Aorta (tissue), 5 donors: ENCODE measurements at regions of chr7 and their contacts with region 1.

Region 1: GRCh38 chr7:47581806-47582763 is at the start of gene TNS3:
- DNase-seq: peak; percentile 62 to 84
- ATAC-seq: peak; percentile 45
- H3K4me3 ChIP-seq: peak within 1 kb of the TSS; percentile 75 to 80
- H3K27ac ChIP-seq: peak within 1 kb of the TSS; percentile 8 to 90
- H3K4me1 ChIP-seq: peaks cover 4 to 10% of the 10 kb centered on the region in 2 donors
- H3K27me3 ChIP-seq: no peaks in the 10 kb centered on the region
- total RNA-seq, gene TNS3: 117 to 140 TPM

Region 2: GRCh38 chr7:47119261-47119865 is 462.7 kb before region 1 on chr7:
- intact Hi-C with region 1: no loop called
- DNase-seq: no peak
- ATAC-seq: peak; percentile 9
- H3K4me3 ChIP-seq: no peak overlapping the region
- H3K27ac ChIP-seq: peak overlapping the region in 1 of 2 donors; percentile 21
- H3K4me1 ChIP-seq: no peaks in the 10 kb centered on the region
- H3K27me3 ChIP-seq: no peaks in the 10 kb centered on the region

Region 3: GRCh38 chr7:47453093-47454049 is 128.7 kb before region 1 on chr7:
- intact Hi-C with region 1: loop called (anchors 5 to 10 kb)
- DNase-seq: peak; percentile 89 to 91
- ATAC-seq: peak; percentile 76
- H3K4me3 ChIP-seq: no peak overlapping the region
- H3K27ac ChIP-seq: peak overlapping the region; percentile 0 to 89
- H3K4me1 ChIP-seq: peaks cover 4 to 7% of the 10 kb centered on the region in 2 donors
- H3K27me3 ChIP-seq: no peaks in the 10 kb centered on the region

Region 4: GRCh38 chr7:47501406-47501805 is 80.7 kb before region 1 on chr7:
- intact Hi-C with region 1: loop called in 1 of 2 experiments (anchors 5 kb)
- DNase-seq: peak in 1 of 2 donors; percentile 62
- ATAC-seq: peak; percentile 5
- H3K4me3 ChIP-seq: no peak overlapping the region
- H3K27ac ChIP-seq: peak overlapping the region in 1 of 2 donors; percentile 60
- H3K4me1 ChIP-seq: peaks cover 0 to 7% of the 10 kb centered on the region in 2 donors
- H3K27me3 ChIP-seq: no peaks in the 10 kb centered on the region

Region 5: GRCh38 chr7:47690902-47691558 is 108.9 kb after region 1 on chr7:
- intact Hi-C with region 1: loop called in 1 of 2 experiments (anchors 5 kb)
- DNase-seq: no peak
- ATAC-seq: peak; percentile 61
- H3K4me3 ChIP-seq: no peak overlapping the region
- H3K27ac ChIP-seq: peak overlapping the region; percentile 20 to 93
- H3K4me1 ChIP-seq: peaks cover 0 to 1% of the 10 kb centered on the region in 2 donors
- H3K27me3 ChIP-seq: no peaks in the 10 kb centered on the region

Region 6: GRCh38 chr7:48004638-48005037 is 422.6 kb after region 1 on chr7:
- intact Hi-C with region 1: no loop called
- DNase-seq: no peak
- ATAC-seq: no peak
- H3K4me3 ChIP-seq: no peak overlapping the region
- H3K27ac ChIP-seq: no peak overlapping the region
- H3K4me1 ChIP-seq: no peaks in the 10 kb centered on the region
- H3K27me3 ChIP-seq: no peaks in the 10 kb centered on the region